HEK293 (cell line): ENCODE measurements at regions of chr16 and their contacts with region 1.

Region 1: GRCh38 chr16:25224731-25225319 is 8.1 kb downstream of the AQP8 start:
- H3K4me3 ChIP-seq: no peak overlapping the region
- H3K27ac ChIP-seq: no peak overlapping the region
- H3K4me1 ChIP-seq: no peaks in the 10 kb centered on the region
- CTCF ChIP-seq: no peak

Region 2: DNA sequence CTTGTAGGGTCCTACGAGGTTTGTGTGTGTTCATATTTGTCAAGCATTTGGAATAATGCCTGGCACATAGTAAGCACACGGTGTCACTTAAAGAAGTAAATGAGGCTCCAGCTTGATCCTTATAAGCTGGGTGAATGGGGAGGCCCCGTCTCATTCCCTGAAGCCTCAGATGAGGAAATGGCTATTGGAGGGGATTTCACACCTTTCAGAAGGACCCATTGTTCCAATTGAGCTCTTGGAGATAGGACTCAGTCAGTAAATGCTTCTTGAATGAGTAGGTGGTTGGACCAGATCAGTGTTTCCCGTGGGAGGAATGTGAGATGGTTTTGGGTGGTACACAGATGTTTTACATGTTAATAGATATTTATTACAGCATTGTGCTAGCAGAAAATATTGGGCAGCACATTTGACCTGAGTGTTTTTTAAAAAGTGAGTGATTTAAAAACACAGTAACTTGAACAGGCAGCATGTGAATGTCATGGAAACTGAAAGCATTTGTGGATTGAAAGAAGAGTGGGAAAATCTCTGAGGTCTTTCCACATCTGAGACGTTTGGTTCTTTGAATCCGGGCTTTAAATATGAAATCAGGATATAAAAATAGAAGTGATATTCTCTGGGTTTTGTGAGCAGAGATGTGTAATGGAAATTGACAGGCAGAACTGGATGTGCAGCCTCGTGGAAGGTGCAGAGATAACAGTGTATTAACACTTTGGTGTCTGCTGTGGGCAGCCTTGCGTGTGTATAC is 173.2 kb before region 1 on chr16:
- CTCF ChIA-PET with region 1: interaction called, 13 read pairs
- POLR2A ChIA-PET with region 1: interaction called, 3 read pairs
- H3K4me3 ChIP-seq: no peak overlapping the region
- H3K27ac ChIP-seq: no peak overlapping the region
- H3K4me1 ChIP-seq: 0 out of 2 replicates have a peak, but pooled peaks cover 3% of the 10 kb centered on the region
- CTCF ChIP-seq: no peak

Region 3: GRCh38 chr16:25100511-25100910 is 124.3 kb before region 1 on chr16:
- CTCF ChIA-PET with region 1: no interaction called
- POLR2A ChIA-PET with region 1: no interaction called
- H3K4me3 ChIP-seq: no peak overlapping the region
- H3K27ac ChIP-seq: no peak overlapping the region
- H3K4me1 ChIP-seq: no peaks in the 10 kb centered on the region
- CTCF ChIP-seq: no peak

Region 4: DNA sequence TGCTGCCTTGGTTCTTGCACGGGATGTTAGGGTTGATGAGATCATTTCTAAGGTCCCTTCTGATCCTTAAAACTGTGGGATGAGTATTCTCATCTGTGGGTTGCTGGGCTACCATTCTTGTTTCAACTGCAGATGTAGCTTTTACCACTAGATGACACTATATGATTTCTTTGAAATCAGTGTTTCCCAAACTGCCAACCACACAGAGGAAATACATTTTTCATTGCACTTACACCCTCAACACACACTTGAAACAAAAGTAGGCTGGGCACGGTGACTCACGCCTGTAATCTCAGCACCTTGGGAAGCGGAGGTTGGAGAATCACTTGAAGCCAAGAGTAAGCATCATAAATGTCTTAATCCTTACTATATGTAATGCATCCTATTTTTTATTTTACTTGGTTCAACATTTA is 98.0 kb before region 1 on chr16:
- CTCF ChIA-PET with region 1: interaction called, 14 read pairs
- POLR2A ChIA-PET with region 1: no interaction called
- H3K4me3 ChIP-seq: no peak overlapping the region
- H3K27ac ChIP-seq: no peak overlapping the region
- H3K4me1 ChIP-seq: no peaks in the 10 kb centered on the region
- CTCF ChIP-seq: peak; percentile 42

Region 5: GRCh38 chr16:25210758-25211157 is 14.1 kb before region 1 on chr16:
- CTCF ChIA-PET with region 1: interaction called, 11 read pairs
- POLR2A ChIA-PET with region 1: no interaction called
- H3K4me3 ChIP-seq: no peak overlapping the region
- H3K27ac ChIP-seq: no peak overlapping the region
- H3K4me1 ChIP-seq: no peaks in the 10 kb centered on the region
- CTCF ChIP-seq: no peak

Region 6: GRCh38 chr16:25235991-25236390 is 11.2 kb after region 1 on chr16:
- CTCF ChIA-PET with region 1: interaction called, 34 read pairs
- POLR2A ChIA-PET with region 1: no interaction called
- H3K4me3 ChIP-seq: no peak overlapping the region
- H3K27ac ChIP-seq: no peak overlapping the region
- H3K4me1 ChIP-seq: no peaks in the 10 kb centered on the region
- CTCF ChIP-seq: no peak